ENCODE measurements at regions of chr2 and their contacts with region 1.

Region 1: GRCh38 chr2:95277246-95277906 is 3.1 kb downstream of the PROM2 start:
- DNase-seq: peak; percentile 65
- ATAC-seq: peak; percentile 62
- H3K4me3 Mint-ChIP-seq: no peak overlapping the region
- H3K27ac Mint-ChIP-seq: no peak overlapping the region
- H3K4me1 Mint-ChIP-seq: peaks cover 37% of the 10 kb centered on the region
- H3K27me3 Mint-ChIP-seq: no peaks in the 10 kb centered on the region
- CTCF ChIP-seq: no peak

Region 2: GRCh38 chr2:95053543-95053942 is 223.8 kb before region 1 on chr2:
- CTCF ChIA-PET with region 1: no interaction called
- POLR2A ChIA-PET with region 1: no interaction called
- DNase-seq: peak; percentile 63
- ATAC-seq: peak; percentile 86
- H3K4me3 Mint-ChIP-seq: no peak overlapping the region
- H3K27ac Mint-ChIP-seq: no peak overlapping the region
- H3K4me1 Mint-ChIP-seq: peaks cover 5% of the 10 kb centered on the region
- H3K27me3 Mint-ChIP-seq: peaks cover 4% of the 10 kb centered on the region
- CTCF ChIP-seq: no peak

Region 3: GRCh38 chr2:95115418-95115817 is 162.0 kb before region 1 on chr2:
- CTCF ChIA-PET with region 1: no interaction called
- POLR2A ChIA-PET with region 1: no interaction called
- DNase-seq: peak; percentile 78
- ATAC-seq: peak; percentile 99
- H3K4me3 Mint-ChIP-seq: no peak overlapping the region
- H3K27ac Mint-ChIP-seq: 0 out of 2 replicates have a peak overlapping the region, but pooled peaks have one; percentile 41
- H3K4me1 Mint-ChIP-seq: peaks cover 27% of the 10 kb centered on the region
- H3K27me3 Mint-ChIP-seq: no peaks in the 10 kb centered on the region
- CTCF ChIP-seq: peak; percentile 66

Region 4: DNA sequence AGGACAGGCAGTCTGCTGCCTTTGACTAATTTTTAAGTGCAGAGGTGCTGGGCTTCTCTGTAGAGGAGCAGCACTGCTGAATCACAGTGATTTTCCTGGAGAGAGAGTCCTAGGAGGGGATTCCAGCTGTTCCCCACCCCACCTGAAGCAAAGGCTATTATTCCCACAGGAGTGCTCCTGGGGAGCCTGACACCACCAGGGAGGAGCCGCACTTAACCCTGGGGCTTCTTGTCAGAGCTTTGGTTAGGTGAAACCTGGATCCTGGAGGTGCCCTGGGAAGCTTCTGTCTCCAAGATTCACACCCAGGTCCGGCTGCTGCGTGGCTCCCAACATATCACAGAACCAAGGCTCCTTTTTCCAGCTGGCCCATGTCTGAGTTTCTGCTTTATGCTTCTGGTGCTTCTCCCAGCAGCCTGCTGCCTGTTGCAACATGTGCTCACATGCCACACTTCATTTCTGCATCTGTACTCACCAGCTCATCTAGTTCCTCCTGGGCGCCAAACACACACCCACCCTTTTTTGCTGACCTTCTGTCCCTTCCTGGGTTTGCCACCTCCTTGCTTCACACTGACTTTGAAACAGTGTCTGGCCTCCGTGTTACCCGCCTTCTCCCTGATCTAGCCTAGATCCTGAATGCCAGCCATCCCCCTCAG is 17.5 kb before region 1 on chr2:
- CTCF ChIA-PET with region 1: no interaction called
- POLR2A ChIA-PET with region 1: no interaction called
- DNase-seq: no peak
- ATAC-seq: no peak
- H3K4me3 Mint-ChIP-seq: no peak overlapping the region
- H3K27ac Mint-ChIP-seq: no peak overlapping the region
- H3K4me1 Mint-ChIP-seq: peaks cover 14% of the 10 kb centered on the region
- H3K27me3 Mint-ChIP-seq: peaks cover 4% of the 10 kb centered on the region
- CTCF ChIP-seq: no peak

Region 5: DNA sequence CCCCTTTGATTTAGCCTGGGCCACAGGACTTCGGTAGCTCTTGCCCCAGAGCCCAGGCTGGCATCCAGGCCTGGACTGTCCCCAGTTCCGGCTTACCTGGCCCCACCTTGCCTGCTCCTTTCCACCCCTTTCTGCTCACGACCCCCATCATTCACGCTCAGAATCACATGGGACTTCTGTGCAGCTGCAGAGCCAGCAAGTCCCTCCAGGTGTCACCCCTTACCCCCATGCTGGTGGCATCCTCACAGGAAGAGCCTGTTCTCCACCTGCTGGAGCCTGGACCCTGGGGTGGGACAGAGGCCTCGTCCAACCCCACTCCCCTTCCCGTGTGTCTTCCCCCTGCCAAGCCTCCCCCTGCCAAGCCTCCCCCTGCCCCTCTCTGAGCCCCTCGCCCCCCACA is 11.9 kb after region 1 on chr2:
- CTCF ChIA-PET with region 1: interaction called, 28 read pairs
- POLR2A ChIA-PET with region 1: interaction called, 3 read pairs
- DNase-seq: peak; percentile 25
- ATAC-seq: peak; percentile 76
- H3K4me3 Mint-ChIP-seq: no peak overlapping the region
- H3K27ac Mint-ChIP-seq: no peak overlapping the region
- H3K4me1 Mint-ChIP-seq: 0 out of 2 replicates have a peak, but pooled peaks cover 6% of the 10 kb centered on the region
- H3K27me3 Mint-ChIP-seq: peaks cover 5% of the 10 kb centered on the region
- CTCF ChIP-seq: no peak

Region 6: DNA sequence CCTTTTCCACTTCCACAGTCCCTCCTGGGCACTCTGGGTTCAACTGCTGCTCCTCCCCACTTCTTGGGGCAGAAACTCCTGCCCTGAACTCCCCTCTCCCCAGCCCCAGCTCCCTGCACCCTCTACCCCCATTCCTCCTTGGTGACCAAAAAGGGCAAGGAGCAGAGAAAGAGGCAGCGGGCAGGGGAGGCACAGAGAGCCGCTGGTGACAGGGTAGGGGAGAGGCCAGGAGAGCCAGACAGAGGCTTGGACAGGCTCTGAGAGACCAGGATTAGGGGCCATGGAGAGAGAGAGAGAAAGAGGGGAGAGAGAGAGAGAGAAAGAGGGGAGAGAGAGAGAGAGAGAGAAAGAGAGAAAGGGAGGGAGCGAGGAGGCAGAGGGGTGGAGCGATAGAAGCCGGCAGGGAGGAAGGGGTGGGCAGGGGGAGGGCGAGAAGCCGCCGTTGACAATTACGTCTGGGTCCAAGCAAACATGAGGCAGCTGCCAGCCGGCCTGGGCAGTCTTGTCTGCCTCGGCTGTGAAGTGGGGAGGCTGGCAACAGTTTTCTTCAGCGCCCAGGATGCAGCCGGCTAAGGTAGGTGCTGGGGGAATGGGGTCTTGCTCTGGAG is 19.6 kb after region 1 on chr2 and contains the start of gene KCNIP3:
- CTCF ChIA-PET with region 1: interaction called, 16 read pairs
- POLR2A ChIA-PET with region 1: interaction called, 5 read pairs
- DNase-seq: peak; percentile 33
- ATAC-seq: peak; percentile 68
- H3K4me3 Mint-ChIP-seq: peak within 1 kb of the TSS; percentile 48
- H3K27ac Mint-ChIP-seq: no peak within 1 kb of the TSS
- H3K4me1 Mint-ChIP-seq: peaks cover 11% of the 10 kb centered on the region
- H3K27me3 Mint-ChIP-seq: no peaks in the 10 kb centered on the region; the same call in 1 of the 2 replicates
- CTCF ChIP-seq: no peak
- total RNA-seq, gene KCNIP3: 2.1 to 3.3 TPM (median 3.1 TPM) in 3 replicates

Region 7: DNA sequence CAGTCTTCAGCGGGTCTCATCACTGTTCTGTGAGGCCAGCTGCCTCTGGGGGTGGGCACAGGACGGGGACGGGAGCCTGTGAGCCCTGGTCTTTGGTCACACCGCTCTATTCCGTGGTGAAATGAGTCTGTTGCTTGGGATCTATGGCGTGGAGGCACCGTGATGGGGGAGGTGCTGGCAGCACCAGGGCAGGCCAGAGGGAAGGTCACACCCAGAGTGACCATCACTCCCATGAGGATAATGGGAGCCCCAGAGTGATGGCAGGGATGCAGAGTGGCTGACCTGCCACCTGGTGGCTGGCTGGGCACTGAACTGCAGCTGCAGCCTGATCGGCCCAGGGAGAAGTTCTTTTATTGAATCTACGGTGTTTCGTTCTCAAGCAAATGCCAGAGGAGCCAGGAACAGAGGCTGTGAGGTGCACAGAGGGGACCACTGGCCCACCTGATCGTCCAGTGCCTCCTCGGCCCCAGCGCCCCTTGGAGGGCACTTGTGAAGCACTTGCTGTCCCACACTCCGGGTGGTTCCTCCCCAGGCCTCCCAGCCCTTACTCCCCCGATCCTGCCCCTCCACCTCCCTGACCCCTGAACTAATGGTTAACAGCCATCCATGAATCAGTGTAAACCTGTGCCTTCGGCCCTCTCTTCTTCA is 37.7 kb after region 1 on chr2:
- CTCF ChIA-PET with region 1: interaction called, 10 read pairs
- POLR2A ChIA-PET with region 1: no interaction called
- DNase-seq: peak; percentile 71
- ATAC-seq: peak; percentile 84
- H3K4me3 Mint-ChIP-seq: no peak overlapping the region
- H3K27ac Mint-ChIP-seq: peak overlapping the region; percentile 61; the same call in 1 of the 2 replicates
- H3K4me1 Mint-ChIP-seq: peaks cover 3% of the 10 kb centered on the region
- H3K27me3 Mint-ChIP-seq: no peaks in the 10 kb centered on the region
- CTCF ChIP-seq: peak; percentile 68

Measured in WTC11 (cell line).